ENCODE measurements at regions of chr19 and their contacts with region 1.

Region 1: GRCh38 chr19:45439569-45440254 is 16.0 kb upstream of the ERCC1 start:
- DNase-seq: peak; percentile 88
- ATAC-seq: peak; percentile 59 to 73
- H3K4me3 ChIP-seq: peak overlapping the region; percentile 78
- H3K27ac ChIP-seq: peak overlapping the region; percentile 96
- H3K4me1 ChIP-seq: peaks cover 25% of the 10 kb centered on the region
- H3K27me3 ChIP-seq: no peaks in the 10 kb centered on the region
- CTCF ChIP-seq: peak; percentile 100

Region 2: DNA sequence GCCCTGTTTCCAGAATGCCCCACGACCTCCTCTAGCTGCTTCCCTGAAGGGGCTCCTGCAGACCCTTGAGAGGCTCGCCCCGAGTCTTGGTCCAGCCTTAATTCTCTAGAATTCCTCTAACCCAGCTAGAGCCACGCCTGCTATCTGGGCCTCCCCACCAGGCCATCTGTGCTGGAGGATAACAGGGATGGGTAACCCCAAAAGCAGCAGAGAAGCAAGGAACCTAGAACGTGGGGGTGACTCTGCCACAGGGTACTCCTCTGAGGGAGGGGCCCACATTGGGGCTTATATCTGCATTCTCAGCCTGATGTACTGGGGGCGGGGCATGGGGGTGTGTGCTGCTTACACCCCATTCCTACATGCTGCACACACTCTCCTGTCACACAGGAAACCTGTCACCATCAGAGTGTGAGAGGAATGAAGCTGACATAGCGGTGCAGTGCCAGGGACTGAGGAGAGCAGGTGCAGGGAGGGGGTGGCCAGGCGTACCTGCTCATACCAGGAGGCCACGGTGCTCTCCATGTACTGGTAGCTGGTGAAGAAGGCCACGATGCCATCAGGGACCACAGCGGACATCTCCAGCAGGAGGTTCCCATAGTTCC is 85.4 kb before region 1 on chr19:
- intact Hi-C with region 1: no loop called
- DNase-seq: no peak
- ATAC-seq: no peak
- H3K4me3 ChIP-seq: no peak overlapping the region
- H3K27ac ChIP-seq: no peak overlapping the region
- H3K4me1 ChIP-seq: no peaks in the 10 kb centered on the region
- H3K27me3 ChIP-seq: no peaks in the 10 kb centered on the region
- CTCF ChIP-seq: no peak

Region 3: DNA sequence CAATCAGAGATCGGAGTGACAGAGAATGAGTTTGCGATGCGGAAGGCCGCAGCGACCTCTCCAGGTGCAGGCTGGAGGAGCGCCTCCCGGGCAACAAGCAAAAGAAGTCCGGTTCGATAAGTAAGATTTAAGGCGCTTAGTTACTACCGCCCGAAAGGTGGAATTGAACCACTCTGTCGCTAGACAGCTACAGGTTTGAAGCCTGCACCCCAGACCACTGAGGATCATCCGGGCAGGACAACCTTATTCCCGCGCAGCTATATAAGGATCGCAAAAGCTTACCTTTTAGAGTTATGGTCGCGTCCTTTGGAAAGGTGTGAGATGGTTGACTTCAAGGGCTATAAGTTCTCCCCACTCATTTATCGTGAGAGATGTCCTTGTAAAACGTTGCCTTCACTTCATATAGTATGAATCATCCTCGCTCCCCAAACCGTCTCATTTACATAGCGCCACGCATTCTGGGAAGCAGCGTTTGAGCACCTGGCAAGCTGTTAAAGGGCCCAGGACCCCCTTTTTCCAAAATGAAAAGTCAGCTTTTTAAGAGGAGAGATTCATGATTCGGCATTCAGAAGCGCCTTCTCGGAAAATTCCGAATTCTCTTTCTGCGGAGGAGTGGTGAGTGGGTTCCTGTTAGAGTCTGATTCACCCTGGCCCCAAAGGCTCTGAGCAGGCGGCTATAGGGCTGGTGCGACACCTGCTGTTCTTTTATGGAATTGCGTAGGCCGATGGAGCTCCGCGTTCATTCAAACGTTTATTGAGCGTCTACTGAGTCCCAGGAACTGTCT is 38.9 kb after region 1 on chr19:
- intact Hi-C with region 1: loop called (anchors 5 kb)
- DNase-seq: peak; percentile 88
- ATAC-seq: peak; percentile 86 to 90
- H3K4me3 ChIP-seq: peak overlapping the region; percentile 57
- H3K27ac ChIP-seq: peak overlapping the region; percentile 97
- H3K4me1 ChIP-seq: peaks cover 20% of the 10 kb centered on the region
- H3K27me3 ChIP-seq: peaks cover 8% of the 10 kb centered on the region
- CTCF ChIP-seq: peak; percentile 96